ENCODE measurements at regions of chr19 and their contacts with region 1.

Region 1: DNA sequence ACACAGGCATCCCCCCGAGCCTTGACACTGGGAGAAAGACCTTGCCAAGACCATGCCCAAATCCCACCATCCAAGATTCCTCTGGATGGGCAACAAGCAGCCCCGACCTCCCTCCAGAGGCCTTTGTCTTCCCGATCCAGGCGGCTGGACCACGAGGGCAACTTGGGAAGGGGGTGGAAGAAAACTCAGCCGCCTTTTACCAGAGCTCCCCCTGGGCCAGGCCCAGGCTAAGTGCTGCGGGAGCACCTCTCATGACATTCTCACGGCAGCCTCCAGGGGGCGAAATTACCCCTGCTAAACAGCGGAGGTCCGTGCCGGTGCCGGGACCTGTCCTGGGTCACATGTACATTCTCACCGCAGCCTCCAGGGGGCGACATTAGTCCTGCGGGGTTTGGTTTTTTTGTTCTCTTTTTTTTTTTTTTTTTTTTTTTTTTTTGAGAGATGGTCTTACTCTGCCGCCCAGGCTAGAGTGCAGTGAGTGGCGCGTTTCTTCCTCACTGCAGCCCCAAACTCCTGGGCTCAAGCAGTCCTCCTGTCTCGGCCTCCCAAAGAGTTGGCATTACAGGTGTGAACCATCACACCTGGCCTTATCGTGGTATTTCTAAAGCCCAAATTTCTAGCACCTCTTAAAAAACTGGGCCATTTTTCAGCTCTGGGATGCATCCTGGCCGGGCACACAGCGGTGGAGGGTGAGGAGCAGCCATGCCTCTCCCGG is 2.1 kb upstream of the RSPH6A start:
- DNase-seq: peak; percentile 85
- H3K4me3 ChIP-seq: no peak overlapping the region
- H3K27ac ChIP-seq: no peak overlapping the region
- H3K27me3 ChIP-seq: no peaks in the 10 kb centered on the region
- CTCF ChIP-seq: peak; percentile 94

Region 2: GRCh38 chr19:45798995-45799517 is 18.1 kb before region 1 on chr19:
- CTCF ChIA-PET with region 1: interaction called, 42 read pairs
- POLR2A ChIA-PET with region 1: no interaction called
- DNase-seq: peak; percentile 61
- H3K4me3 ChIP-seq: no peak overlapping the region
- H3K27ac ChIP-seq: no peak overlapping the region
- H3K27me3 ChIP-seq: no peaks in the 10 kb centered on the region
- CTCF ChIP-seq: peak; percentile 79

Region 3: DNA sequence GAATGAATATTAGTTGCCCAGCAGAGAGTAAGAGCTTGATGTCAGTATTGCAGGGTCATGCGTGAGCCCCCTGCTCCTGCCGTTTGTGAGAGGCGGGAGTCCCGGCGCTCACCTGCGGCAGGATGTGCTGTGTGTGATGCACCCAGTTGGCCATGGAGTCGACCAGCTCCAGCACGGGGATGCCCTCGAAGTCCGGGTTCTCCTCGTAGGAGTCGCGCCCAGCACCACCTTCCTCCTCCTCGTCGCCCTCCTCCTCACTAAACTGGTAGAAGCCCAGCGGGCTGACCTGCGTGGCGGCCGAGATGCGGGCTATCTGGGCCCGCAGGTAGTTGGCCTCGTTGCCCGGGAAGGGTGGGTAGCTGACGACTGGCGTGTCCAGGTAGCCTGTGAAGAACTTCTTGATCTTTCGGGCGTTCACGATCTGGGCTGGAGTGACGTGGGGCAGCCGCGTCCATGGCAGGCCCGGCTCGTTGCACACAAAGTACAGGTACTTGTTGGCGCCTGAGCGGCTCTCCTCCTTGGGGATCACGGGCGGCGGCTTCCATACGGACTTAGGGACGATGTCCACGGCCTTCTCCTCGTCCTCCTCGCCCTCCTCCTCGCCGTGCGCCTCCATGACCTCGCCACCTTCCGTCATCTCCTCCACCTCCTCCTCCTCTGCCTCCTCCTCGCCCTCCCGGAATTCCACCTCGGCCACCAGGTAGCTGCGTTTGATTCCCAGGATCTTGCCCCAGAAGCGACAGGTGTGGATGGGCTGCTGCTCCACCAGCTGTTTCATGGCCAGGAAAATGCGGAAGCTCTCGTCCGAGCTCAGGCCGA is 12.8 kb before region 1 on chr19:
- CTCF ChIA-PET with region 1: interaction called, 42 read pairs
- POLR2A ChIA-PET with region 1: interaction called, 3 read pairs
- DNase-seq: no peak
- H3K4me3 ChIP-seq: no peak overlapping the region
- H3K27ac ChIP-seq: no peak overlapping the region
- H3K27me3 ChIP-seq: no peaks in the 10 kb centered on the region
- CTCF ChIP-seq: no peak

Region 4: DNA sequence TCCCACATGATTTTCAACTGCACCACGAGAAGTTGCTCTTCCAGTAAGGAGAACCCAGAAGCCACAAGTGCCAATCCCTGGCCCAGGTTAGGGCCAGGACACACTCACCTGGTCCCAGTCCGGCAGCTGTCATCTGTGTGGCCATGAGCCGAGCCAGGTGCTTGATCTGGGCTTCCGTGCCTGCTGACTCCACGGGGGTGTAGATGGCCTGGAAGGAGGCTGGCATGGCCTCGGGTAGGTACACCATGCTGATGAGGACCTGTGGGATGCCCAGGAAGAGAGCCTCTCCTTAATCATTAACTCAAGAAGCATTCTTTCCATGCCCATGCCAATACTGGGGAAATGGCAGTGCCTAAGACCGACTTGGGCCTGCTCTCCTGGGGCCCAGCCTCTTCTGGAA is 17.8 kb after region 1 on chr19:
- CTCF ChIA-PET with region 1: interaction called, 13 read pairs
- POLR2A ChIA-PET with region 1: interaction called, 4 read pairs
- DNase-seq: no peak
- H3K4me3 ChIP-seq: no peak overlapping the region
- H3K27ac ChIP-seq: no peak overlapping the region
- H3K27me3 ChIP-seq: no peaks in the 10 kb centered on the region
- CTCF ChIP-seq: no peak

Region 5: GRCh38 chr19:45842198-45842597 is 25.0 kb after region 1 on chr19:
- CTCF ChIA-PET with region 1: interaction called, 11 read pairs
- POLR2A ChIA-PET with region 1: no interaction called
- DNase-seq: no peak
- H3K4me3 ChIP-seq: no peak overlapping the region
- H3K27ac ChIP-seq: no peak overlapping the region
- H3K27me3 ChIP-seq: no peaks in the 10 kb centered on the region
- CTCF ChIP-seq: no peak

Region 6: GRCh38 chr19:45852145-45852750 is 35.1 kb after region 1 on chr19:
- CTCF ChIA-PET with region 1: interaction called, 15 read pairs
- POLR2A ChIA-PET with region 1: no interaction called
- DNase-seq: no peak
- H3K4me3 ChIP-seq: no peak overlapping the region
- H3K27ac ChIP-seq: no peak overlapping the region
- H3K27me3 ChIP-seq: no peaks in the 10 kb centered on the region
- CTCF ChIP-seq: no peak

Region 7: DNA sequence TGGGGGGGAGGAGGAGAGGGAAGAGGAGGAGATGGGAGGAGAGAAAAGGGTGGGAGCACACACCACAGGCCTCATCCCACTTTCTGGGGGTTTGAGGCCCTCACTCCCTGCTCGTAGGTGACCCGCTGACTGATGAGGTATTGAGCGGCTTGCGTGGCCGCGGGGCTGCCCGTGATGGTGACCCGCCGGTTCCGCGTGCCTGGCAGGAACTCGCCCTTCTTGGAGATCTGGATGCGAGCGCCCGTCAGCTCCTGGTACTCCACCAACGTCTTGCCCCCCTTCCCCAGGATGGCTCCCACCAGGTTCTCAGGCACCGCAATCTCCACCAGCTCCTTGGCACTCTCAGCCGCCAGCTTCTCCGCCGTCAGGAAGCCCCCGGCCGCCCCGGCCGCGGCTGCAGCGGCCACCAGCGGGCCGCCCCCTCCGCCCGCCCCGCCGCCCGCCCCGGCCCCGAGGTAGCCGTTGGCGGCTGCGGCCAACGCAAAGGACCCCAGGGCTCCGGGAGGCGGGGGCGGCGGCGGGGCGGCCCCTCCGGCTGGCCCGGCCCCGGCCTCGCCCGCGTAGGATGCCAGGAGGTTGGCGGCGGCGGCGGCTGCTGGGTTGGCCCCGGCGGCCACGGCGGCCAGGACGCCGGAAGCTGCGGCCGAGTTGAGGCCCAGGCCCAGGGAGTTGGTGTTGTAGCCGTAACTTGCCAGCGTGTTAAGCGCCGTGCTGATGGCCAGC is 122.8 kb after region 1 on chr19:
- CTCF ChIA-PET with region 1: no interaction called
- POLR2A ChIA-PET with region 1: no interaction called
- DNase-seq: no peak
- H3K4me3 ChIP-seq: no peak overlapping the region
- H3K27ac ChIP-seq: no peak overlapping the region
- H3K27me3 ChIP-seq: peaks cover 41% of the 10 kb centered on the region
- CTCF ChIP-seq: no peak

Region 8: DNA sequence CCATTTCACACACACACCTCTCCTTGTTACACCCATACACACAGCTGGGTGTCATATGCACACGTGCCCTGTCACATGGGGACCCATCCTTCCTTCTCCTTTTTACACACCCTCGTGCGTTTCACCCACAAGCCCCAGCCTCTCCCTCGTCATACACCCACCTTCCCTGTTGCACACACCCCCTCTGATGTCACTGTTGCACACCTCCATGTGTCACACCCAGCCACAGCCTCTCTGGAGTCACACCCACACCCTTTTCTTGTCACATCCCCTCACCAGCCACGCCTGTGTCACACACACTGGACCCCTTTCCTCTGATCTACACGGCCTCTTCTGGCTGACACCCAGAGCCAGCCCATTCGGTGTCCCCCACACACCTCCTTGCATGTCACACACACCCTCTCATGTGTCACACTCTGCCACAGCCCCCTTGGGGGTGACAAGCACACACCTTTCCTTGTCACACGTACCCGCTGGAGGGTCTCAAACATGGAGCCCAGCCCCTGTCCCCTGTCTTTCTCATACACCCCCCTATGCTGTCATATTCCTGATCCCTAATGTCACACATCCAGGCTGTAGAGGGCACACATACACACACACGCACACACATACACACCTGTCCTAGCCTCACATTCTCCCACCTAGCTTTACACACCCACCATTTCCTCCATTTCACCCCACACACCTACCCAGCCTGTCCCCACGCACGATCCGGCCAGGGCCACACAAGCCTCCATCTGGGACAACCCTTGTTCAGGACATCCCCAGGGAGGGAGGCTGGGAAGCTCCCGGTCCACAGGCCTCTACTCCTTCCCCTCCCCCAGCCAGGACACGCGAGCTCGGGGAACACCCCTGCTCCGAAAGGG is 155.1 kb after region 1 on chr19:
- CTCF ChIA-PET with region 1: no interaction called
- POLR2A ChIA-PET with region 1: no interaction called
- DNase-seq: no peak
- H3K4me3 ChIP-seq: no peak overlapping the region
- H3K27ac ChIP-seq: no peak overlapping the region
- H3K27me3 ChIP-seq: peaks cover 53% of the 10 kb centered on the region
- CTCF ChIP-seq: no peak

Measured in AG04450 (cell line).